BJ (cell line): ENCODE measurements at regions of chr16 and their contacts with region 1.

Region 1: DNA sequence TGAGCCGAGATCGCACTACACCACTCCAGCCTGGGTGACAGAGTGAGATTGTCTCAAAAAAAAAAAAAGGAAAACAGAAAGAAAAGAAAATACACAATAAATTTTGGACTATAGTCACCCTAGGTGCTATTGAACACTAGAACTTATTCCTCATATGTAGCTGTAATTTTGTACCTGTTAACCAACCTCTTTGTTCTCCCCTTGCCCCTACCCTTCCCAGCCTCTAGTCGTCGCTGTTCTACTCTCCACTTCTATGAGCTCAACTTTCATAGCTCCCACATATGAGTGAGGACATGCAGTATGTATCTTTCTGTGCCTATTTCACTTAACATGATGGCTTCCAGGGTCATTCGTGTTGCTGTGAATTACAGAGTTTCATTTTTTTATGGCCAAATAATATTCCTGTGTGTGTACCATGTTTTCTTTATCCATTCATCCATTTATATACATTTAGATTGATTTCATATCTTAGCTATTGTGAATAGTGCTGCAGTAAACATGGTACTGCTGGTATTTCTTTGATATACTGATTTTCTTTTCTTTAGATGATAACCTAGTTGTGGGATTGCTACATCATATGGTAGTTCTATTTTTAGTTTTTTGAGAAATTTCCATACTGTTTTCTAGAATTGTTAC is 28.3 kb downstream of the VPS35L start:
- DNase-seq: no peak
- H3K4me3 ChIP-seq: no peak overlapping the region
- H3K27me3 ChIP-seq: no peaks in the 10 kb centered on the region
- CTCF ChIP-seq: peak; percentile 95

Region 2: DNA sequence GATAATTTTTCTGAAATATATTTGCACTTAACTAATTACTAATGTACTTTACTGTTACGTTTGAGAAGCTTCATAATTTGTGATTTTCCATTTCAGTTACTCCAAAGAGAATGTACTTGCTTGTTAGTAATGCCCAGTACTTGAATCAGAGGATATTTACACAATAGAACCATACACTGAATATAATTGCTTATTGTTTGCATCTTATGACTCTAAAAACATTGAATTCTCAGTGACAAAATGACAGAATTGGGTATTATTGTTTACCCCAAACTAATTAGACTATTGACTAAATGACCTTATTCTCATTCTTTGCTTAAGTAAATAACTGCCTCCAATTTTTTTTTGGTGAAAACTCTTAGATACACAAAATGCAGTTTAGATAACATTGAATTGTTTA is 51.2 kb before region 1 on chr16:
- CTCF ChIA-PET with region 1: no interaction called
- POLR2A ChIA-PET with region 1: no interaction called
- DNase-seq: no peak
- H3K4me3 ChIP-seq: no peak overlapping the region
- H3K27me3 ChIP-seq: no peaks in the 10 kb centered on the region
- CTCF ChIP-seq: no peak

Region 3: DNA sequence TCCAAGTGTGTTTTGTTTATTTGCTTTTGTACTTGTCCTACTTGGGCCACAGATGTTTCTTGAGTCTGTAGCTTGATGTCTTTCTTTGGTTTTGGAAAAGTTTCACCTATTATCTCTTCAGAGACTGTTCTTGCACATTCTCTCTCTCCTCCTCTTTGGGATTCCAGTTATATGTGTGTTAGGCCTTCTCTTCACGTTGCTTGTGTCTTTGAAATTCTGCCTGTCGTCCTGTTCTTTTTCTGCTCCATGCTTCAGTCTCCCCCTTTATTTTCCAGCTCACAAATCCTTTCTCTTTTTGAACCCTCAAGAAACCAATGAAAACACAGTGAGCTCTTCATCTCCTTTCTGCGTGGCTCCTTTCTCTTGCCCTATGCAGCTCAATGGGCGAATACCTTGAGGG is 20.4 kb before region 1 on chr16:
- CTCF ChIA-PET with region 1: interaction called, 24 read pairs
- POLR2A ChIA-PET with region 1: no interaction called
- DNase-seq: no peak
- H3K4me3 ChIP-seq: no peak overlapping the region
- H3K27me3 ChIP-seq: no peaks in the 10 kb centered on the region
- CTCF ChIP-seq: no peak

Region 4: GRCh38 chr16:19601083-19601976 is 17.5 kb after region 1 on chr16:
- CTCF ChIA-PET with region 1: interaction called, 46 read pairs
- POLR2A ChIA-PET with region 1: no interaction called
- DNase-seq: no peak
- H3K4me3 ChIP-seq: no peak overlapping the region
- H3K27me3 ChIP-seq: no peaks in the 10 kb centered on the region
- CTCF ChIP-seq: peak; percentile 57

Region 5: GRCh38 chr16:19737306-19738038 is 153.7 kb after region 1 on chr16:
- CTCF ChIA-PET with region 1: no interaction called
- POLR2A ChIA-PET with region 1: interaction called, 10 read pairs
- DNase-seq: no peak
- H3K4me3 ChIP-seq: no peak overlapping the region
- H3K27me3 ChIP-seq: no peaks in the 10 kb centered on the region
- CTCF ChIP-seq: no peak